ENCODE measurements at regions of chr3 and their contacts with region 1.

Region 1: DNA sequence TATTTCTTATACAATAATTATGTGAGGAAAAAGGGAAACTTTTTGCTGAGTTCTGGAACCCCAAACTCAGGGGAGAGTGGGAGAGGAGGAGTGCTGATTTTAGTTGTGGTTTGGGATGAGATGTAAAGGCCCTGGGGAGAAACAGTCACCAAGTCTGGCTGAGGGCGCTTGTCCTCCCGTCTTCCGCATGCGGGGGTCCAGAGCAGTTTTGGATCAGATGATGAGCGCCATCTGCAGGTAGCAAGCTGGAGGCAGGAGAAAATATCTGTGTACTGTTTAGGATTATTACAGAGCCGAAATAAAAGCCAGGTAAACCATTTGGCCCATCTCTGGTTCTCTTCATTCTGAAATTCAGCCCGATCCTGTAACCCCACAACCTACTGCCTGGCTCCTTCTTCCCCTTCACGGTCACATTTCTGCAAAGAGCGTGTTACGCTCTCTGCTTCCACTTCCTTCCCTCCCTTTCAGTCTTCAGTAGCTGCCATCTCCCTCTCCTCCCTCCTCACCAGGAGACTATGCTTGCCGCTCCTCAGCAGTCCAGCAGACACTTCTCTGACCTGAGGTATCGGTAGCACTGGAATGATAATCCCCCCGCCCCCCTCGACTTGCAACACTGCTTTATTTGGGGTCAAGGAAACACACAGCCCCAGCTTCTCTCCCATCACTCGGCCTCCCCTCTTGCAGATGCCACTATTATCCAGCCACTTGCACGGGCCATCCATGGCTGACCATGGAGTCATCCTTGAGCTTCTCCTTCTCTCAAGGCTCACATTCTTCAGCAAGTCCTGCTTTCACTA is 1.4 kb upstream of the PARP14 start:
- DNase-seq: peak; percentile 82
- H3K4me3 Mint-ChIP-seq: peak overlapping the region; percentile 95
- H3K27ac Mint-ChIP-seq: peak overlapping the region; percentile 93
- H3K4me1 Mint-ChIP-seq: peaks cover 26% of the 10 kb centered on the region
- H3K27me3 Mint-ChIP-seq: no peaks in the 10 kb centered on the region
- CTCF ChIP-seq: peak; percentile 78

Region 2: DNA sequence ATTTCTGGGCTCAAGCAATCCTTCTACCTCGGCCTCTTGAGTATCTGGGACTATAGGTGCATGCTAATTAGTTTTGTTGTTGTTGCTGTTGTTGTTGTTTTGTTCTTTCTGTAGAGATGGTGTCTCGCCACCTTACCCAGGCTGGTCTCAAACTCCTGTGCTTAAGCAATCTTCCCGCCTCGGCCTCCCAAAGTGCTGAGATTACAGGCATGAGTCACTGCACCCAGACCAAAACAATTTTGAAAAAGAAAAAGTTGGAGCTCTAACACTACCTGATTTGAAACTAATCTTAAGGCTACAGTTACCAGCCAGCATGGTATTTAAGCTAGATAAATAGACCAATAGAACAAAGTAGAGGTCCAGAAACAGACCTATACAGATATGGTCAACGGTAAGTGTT is 194.3 kb before region 1 on chr3:
- CTCF ChIA-PET with region 1: no interaction called
- intact Hi-C with region 1: no loop called
- DNase-seq: peak; percentile 12
- H3K4me3 Mint-ChIP-seq: no peak overlapping the region
- H3K27ac Mint-ChIP-seq: no peak overlapping the region
- H3K4me1 Mint-ChIP-seq: peaks cover 17% of the 10 kb centered on the region
- H3K27me3 Mint-ChIP-seq: no peaks in the 10 kb centered on the region
- CTCF ChIP-seq: no peak

Region 3: DNA sequence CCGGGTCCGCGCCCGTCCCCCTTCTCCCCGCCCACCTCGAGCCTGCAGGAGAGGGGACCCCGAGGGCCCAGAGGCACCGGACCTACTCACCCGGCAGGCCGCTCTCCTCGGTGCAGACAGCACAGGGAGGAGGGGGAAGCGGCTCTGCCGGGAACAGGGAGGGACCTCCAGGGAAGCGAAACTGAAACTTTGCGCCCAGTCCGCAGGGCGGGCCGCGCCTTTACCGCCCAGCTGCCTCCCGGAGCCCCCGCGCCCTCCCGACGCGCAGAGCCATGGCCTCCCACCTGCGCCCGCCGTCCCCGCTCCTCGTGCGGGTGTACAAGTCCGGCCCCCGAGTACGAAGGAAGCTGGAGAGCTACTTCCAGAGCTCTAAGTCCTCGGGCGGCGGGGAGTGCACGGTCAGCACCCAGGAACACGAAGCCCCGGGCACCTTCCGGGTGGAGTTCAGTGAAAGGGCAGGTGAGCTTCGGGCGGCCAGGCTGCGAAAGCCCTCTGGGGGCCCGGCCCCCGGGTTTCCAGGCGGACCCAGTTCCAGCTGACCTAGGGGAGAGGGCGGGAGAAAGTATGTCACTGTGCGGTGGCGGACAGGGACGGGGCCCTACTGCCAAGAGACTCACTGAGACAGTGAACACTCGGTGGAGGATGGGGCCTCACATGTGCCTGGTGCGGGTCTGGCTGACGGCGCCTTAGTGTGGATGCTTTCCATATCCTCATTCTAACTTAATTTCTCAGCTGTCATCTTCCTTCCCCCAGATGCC is 114.9 kb before region 1 on chr3 and contains the starts of genes DTX3L and PARP9:
- CTCF ChIA-PET with region 1: interaction called, 17 read pairs
- intact Hi-C with region 1: loop called (anchors 1 kb)
- DNase-seq: peak; percentile 87
- H3K4me3 Mint-ChIP-seq: peak within 1 kb of the TSS; percentile 90
- H3K27ac Mint-ChIP-seq: peak within 1 kb of the TSS; percentile 90
- H3K4me1 Mint-ChIP-seq: peaks cover 48% of the 10 kb centered on the region
- H3K27me3 Mint-ChIP-seq: no peaks in the 10 kb centered on the region
- CTCF ChIP-seq: no peak
- total RNA-seq, gene DTX3L: 73.9 and 121 TPM in 2 replicates
- total RNA-seq, gene PARP9: 71.2 and 128 TPM in 2 replicates

Region 4: DNA sequence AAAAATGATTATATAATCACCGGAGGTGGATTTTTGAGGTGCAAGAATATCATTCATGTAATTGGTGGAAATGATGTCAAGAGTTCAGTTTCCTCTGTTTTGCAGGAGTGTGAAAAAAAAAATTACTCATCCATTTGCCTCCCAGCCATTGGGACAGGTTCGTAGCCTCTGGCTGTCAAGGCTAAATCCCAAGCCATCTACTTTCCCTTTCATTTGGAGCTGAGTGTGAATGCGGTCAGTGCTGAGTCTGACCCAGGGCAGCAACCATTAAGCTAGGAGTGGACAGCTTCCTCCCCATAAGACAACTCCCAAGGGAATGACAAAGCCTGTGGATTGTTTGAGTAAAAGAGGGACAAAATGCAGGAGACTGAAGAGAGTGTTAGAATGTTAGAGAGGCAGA is 35.0 kb after region 1 on chr3:
- CTCF ChIA-PET with region 1: no interaction called
- intact Hi-C with region 1: no loop called
- DNase-seq: no peak
- H3K4me3 Mint-ChIP-seq: no peak overlapping the region
- H3K27ac Mint-ChIP-seq: no peak overlapping the region
- H3K4me1 Mint-ChIP-seq: no peaks in the 10 kb centered on the region
- H3K27me3 Mint-ChIP-seq: no peaks in the 10 kb centered on the region
- CTCF ChIP-seq: no peak